AG04450 (cell line): ENCODE measurements at regions of chr2 and their contacts with region 1.

Region 1: GRCh38 chr2:118061135-118061955 is 26.9 kb upstream of the INSIG2 start:
- DNase-seq: no peak
- H3K4me3 ChIP-seq: no peak overlapping the region
- H3K27ac ChIP-seq: no peak overlapping the region
- H3K27me3 ChIP-seq: no peaks in the 10 kb centered on the region
- CTCF ChIP-seq: 0 out of 2 replicates have a peak, but pooled peaks have one; percentile 17

Region 2: DNA sequence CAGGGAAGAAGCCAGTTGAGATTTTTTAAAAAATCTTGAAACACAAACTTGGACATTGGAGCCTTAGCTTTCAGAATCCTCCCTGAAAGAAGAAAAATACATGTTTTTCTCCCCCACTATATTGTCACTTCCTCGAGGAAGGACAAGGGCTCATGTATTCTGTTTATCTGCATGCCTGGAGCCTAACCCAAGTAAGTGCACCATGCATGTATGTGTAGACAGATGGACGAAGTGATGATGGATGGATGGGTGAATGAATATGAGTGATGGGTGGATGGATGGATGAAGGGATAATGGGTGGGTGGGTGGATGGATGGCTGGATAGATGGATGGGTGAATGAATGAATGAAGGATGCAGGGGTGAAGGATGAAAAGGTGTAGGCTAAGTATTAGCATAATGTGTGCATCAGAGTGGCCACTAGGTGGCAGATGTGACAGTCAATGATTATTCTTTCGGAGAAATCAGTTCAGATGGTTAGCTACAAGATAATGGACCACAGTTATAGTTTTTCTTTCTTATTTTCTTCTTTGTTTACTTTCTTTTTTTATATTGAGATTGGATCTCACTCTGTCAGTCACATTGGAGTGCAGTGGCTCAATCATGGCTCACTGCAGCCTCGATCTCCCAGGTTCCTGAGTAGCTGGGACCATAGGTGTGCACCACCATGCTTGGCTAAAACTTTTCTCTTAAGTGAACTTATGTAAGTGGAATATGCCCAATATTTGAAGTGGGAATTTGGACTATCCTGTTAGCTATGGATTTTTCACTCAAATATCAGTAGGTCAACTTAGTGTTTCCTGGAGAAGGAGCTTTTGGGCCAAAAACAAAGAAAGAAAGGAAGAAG is 29.0 kb before region 1 on chr2:
- CTCF ChIA-PET with region 1: interaction called, 24 read pairs
- POLR2A ChIA-PET with region 1: no interaction called
- DNase-seq: no peak
- H3K4me3 ChIP-seq: no peak overlapping the region
- H3K27ac ChIP-seq: no peak overlapping the region
- H3K27me3 ChIP-seq: peaks cover 10% of the 10 kb centered on the region
- CTCF ChIP-seq: peak; percentile 77

Region 3: GRCh38 chr2:118207889-118208288 is 146.5 kb after region 1 on chr2:
- CTCF ChIA-PET with region 1: no interaction called
- POLR2A ChIA-PET with region 1: no interaction called
- DNase-seq: no peak
- H3K4me3 ChIP-seq: no peak overlapping the region
- H3K27ac ChIP-seq: no peak overlapping the region
- H3K27me3 ChIP-seq: no peaks in the 10 kb centered on the region
- CTCF ChIP-seq: no peak

Region 4: DNA sequence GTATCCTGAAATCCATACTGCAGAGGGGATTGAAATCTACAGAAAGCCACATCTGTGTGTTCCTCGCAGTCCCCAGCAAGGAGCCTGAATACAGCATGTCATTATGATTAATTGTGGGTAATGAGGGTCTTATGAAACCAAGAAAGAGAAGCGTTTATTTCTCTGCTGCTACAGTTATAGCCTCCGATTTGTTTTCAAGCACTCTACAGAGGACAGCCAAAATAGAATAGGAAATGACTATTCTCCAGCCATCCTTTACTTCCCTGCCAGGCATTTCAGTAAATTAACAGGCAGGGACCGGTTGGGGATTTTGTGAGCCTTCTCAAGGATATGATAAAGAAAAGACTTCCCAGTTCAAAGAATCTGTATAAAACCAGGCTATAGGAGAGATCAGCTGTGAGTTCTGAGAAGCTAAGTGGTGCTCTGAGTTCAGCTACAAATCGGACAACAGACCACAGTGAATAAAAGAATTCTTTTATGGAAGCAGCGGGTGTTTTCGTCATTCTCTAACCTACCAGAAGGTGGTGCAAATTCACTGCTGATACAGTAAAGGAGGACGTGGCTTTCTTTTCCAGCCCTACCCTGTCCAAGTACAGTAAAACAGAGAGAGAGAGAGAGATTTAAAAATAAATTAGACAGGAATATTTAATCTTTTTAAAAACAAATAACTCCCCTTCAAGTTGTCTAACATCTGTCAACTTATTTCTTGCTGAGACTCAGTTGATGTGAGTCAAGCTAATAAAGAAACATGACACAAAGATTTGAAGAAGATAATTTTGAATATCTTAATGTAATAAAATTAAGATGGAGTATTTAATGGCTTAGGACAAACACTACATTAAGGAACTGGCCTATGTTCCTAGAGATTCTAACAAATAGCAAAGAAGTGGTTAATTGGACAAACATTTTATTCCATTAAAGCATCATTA is 160.6 kb after region 1 on chr2:
- CTCF ChIA-PET with region 1: no interaction called
- POLR2A ChIA-PET with region 1: no interaction called
- DNase-seq: peak; percentile 36
- H3K4me3 ChIP-seq: no peak overlapping the region
- H3K27ac ChIP-seq: no peak overlapping the region
- H3K27me3 ChIP-seq: peaks cover 44% of the 10 kb centered on the region
- CTCF ChIP-seq: peak; percentile 75